ENCODE measurements at regions of chr3 and their contacts with region 1.

Region 1: GRCh38 chr3:141875374-141875892 is 1.0 kb upstream of the ATP1B3 start:
- DNase-seq: peak; percentile 87
- CTCF ChIP-seq: peak; percentile 92

Region 2: GRCh38 chr3:141487521-141488252 is 387.7 kb before region 1 on chr3:
- CTCF ChIA-PET with region 1: no interaction called
- POLR2A ChIA-PET with region 1: no interaction called
- DNase-seq: peak; percentile 77
- CTCF ChIP-seq: no peak

Region 3: DNA sequence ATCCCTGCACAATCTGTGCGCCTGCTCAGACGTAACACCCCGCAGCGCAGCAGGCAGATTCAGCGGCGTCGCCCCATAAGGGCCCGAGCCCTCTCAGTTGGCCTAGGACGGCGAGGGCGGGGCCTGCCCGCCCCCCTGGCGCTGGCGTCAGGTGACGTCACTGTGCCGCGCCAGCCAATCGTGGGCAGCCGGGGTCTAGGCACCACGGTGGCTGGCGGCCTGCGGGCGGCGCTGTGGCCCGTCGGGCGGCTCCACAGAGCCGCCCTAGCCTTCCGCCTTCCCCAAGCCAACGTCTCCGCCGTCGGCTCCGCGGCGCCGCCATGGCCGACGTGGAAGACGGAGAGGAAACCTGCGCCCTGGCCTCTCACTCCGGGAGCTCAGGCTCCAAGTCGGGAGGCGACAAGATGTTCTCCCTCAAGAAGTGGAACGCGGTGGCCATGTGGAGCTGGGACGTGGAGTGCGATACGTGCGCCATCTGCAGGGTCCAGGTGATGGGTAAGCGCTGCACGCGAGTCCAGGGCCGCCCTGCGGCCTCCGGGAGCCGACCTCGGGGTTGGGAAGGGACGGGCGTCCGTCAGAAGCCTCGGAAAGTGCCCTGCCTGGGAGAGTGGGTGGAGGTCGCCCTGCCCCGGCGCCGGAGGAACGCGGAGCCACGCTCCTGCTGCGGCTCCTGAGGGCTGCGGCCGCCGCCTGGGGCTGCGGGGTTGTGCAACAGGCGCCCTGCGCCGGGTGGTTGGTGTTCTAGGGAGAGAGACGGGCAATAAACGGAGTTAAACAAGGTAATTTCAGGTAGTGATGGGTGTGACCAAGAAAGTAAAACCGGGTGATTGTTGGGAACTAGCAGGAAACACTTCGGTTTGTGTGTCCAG is 137.2 kb before region 1 on chr3 and contains the start of gene RNF7:
- CTCF ChIA-PET with region 1: interaction called, 21 read pairs
- POLR2A ChIA-PET with region 1: interaction called, 4 read pairs
- DNase-seq: peak; percentile 97
- CTCF ChIP-seq: peak; percentile 87

Region 4: GRCh38 chr3:141863491-141863890 is 11.9 kb before region 1 on chr3:
- CTCF ChIA-PET with region 1: interaction called, 15 read pairs
- POLR2A ChIA-PET with region 1: interaction called, 5 read pairs
- DNase-seq: no peak
- CTCF ChIP-seq: no peak

Region 5: DNA sequence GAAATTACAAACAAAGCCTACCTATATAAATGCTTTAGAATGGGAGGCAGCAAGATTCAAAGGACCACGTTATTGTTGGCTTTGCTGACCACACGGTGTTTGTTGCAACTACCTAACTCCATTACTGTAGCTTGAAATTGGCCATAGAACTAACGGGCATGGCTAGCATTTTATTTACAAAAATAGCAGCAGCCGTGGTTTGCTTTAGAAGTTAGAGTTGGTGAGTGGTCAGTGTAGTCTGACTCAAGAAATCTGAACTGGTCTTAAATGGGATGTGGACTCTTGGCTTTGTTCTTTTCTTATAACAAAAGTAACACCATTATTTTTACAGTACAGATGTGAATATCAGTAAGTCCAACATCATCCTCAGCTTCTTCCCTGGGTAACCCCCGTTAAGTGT is 11.6 kb after region 1 on chr3:
- CTCF ChIA-PET with region 1: interaction called, 30 read pairs
- POLR2A ChIA-PET with region 1: interaction called, 11 read pairs
- DNase-seq: no peak
- CTCF ChIP-seq: no peak

Region 6: DNA sequence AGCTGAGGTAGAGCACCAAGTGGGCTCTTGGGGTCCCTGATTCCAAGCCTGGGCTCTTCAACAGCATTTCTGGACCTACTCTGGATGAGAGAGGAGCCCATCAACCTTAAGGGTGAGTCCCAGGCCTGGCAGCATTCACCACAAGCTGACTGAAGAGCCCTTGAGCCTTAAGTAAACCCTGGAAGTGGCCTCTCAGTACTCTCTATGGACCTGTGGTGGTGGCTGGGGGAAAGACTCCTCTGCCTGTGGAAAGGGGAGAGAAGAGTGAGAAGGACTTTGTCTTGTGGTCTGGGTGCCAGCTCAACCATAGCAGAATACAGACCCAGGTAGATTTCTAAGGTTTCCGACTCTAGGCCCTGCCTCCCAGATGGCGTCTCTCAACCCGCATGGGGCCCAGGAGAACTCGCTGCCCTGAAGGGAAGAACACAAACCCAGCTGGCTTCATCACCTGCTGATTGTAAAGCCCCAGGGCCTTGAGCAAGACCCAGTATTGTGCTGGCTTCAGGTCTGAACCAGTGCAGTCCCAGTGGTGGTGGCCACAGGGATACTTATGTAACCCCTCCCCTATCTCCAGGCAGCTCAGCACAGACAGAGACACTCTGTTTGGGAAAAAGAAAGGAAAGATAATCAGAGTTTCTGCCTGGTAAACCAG is 202.5 kb after region 1 on chr3:
- CTCF ChIA-PET with region 1: no interaction called
- POLR2A ChIA-PET with region 1: no interaction called
- DNase-seq: no peak
- CTCF ChIP-seq: no peak